ENCODE measurements at regions of chr1 and their contacts with region 1.

Region 1: GRCh38 chr1:201288766-201289165 is 5.5 kb downstream of the PKP1 start:
- DNase-seq: peak; percentile 68
- H3K27ac ChIP-seq: peak overlapping the region; percentile 97
- CTCF ChIP-seq: no peak

Region 2: DNA sequence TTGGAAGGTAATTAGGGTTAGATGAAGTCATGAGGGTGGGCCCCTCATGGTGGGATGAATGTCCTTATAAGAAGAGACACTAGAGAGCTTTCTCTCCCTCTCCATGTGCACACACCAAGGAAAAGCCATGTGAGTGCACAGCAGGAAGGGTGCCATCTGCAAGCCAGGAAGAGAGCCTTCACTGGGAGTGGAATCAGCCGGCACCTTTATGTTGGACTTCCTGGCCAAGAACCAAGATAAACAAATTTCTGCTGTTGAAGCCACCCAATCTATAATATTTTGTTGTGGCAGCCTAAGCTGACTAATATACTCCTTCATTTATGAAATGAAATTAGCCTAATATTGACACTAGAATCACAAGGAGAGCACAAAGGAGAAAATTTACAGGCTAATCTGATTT is 43.7 kb before region 1 on chr1:
- CTCF ChIA-PET with region 1: no interaction called
- POLR2A ChIA-PET with region 1: no interaction called
- DNase-seq: no peak
- H3K27ac ChIP-seq: no peak overlapping the region
- CTCF ChIP-seq: no peak

Region 3: DNA sequence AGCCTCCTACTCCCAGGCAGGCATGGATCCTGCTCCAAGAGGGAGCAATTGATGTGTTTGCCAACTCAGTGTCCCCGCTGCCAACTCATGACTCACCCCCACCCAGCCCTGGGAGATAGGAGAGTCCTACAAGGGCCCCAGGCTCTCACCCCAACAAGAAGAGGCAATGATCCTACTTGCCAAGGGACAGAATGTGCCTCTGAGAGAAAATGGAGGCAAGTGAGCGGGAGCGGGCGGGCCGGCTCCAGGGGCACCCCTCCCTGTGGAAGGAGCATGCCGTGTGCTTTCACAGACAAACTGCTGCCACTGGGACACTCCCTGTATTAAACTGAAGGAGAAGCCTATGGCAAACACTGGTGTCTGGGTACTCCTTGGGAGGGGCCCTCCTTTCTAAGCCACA is 11.2 kb after region 1 on chr1:
- CTCF ChIA-PET with region 1: interaction called, 11 read pairs
- POLR2A ChIA-PET with region 1: interaction called, 20 read pairs
- DNase-seq: peak; percentile 97
- H3K27ac ChIP-seq: peak overlapping the region; percentile 100
- CTCF ChIP-seq: no peak

Region 4: DNA sequence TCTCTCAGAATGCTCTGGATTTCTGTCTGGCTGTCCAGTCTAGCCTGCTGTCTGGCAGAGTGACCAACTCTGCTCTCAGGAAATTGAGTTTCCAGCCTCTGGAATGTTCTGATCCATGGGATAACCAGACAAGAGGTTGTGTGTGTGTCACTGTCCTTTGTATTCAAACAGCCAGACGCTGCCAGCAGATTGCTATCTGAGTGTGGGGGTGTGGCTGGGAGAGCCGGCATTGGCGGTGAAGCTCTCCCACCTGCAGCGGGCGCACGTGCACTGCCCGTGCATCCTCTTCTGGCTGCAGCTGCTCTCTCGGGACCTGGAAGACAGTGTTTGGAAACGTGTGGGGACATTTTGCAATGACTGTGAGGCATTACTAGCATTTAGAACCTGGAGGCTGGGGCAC is 20.7 kb after region 1 on chr1:
- CTCF ChIA-PET with region 1: interaction called, 10 read pairs
- POLR2A ChIA-PET with region 1: interaction called, 31 read pairs
- DNase-seq: peak; percentile 83
- H3K27ac ChIP-seq: peak overlapping the region; percentile 100
- CTCF ChIP-seq: no peak; the same call in 1 of the 2 replicates

Region 5: GRCh38 chr1:201348211-201348566 is 59.4 kb after region 1 on chr1:
- CTCF ChIA-PET with region 1: interaction called, 12 read pairs
- POLR2A ChIA-PET with region 1: interaction called, 3 read pairs
- DNase-seq: peak; percentile 91
- H3K27ac ChIP-seq: no peak overlapping the region
- CTCF ChIP-seq: peak; percentile 49

Region 6: GRCh38 chr1:201361652-201362504 is 73.1 kb after region 1 on chr1:
- CTCF ChIA-PET with region 1: interaction called, 27 read pairs
- POLR2A ChIA-PET with region 1: no interaction called
- DNase-seq: peak; percentile 95
- H3K27ac ChIP-seq: no peak overlapping the region
- CTCF ChIP-seq: peak; percentile 83